ENCODE measurements at regions of chr20 and their contacts with region 1.

Region 1: DNA sequence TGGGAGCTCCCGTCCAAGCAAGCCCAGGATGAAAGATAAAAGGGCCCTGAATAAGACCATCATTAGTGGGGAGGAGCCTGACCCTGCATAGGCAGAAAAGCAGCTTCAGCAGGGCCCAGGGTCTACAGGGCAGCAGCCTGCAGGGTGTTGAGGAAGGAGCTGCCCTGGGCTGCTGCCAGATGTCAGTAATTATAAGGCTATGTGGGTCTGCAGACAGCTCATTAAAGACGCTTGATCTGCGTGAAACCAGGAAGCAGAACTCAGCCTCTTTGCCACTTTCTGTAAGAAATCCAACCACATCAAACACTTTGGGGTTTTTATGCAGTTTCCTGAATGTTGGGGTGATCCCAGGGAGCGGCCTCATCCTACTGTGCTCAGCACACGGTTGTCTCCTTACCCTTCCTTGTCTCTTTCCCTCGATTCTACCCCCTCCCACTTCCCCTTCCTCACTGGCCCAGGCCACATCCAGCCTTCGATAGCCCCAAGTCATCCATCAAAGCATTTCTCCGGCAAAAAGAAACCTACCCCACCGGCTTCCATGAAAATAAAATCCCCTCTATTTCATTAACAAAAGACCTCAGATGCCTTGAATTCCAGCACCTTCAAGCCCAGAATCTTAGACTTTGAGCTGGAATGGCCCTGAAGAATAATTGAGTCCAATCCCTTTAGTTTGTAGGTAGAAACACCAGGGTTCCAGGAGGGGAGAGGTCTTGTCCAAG is 1.0 kb upstream of the TGM6 start:
- DNase-seq: no peak
- ATAC-seq: no peak
- H3K4me3 ChIP-seq: no peak overlapping the region
- H3K27ac ChIP-seq: no peak overlapping the region
- H3K4me1 ChIP-seq: no peaks in the 10 kb centered on the region
- H3K27me3 ChIP-seq: peaks cover 0 to 8% (median 0%) of the 10 kb centered on the region in 7 donors
- CTCF ChIP-seq: no peak

Region 2: GRCh38 chr20:2314759-2315439 is 64.8 kb before region 1 on chr20:
- intact Hi-C with region 1: loop called in 1 of 10 experiments (anchors 10 kb)
- DNase-seq: peak; percentile 24 to 42
- ATAC-seq: peak; percentile 65 to 94 (median 86)
- H3K4me3 ChIP-seq: no peak overlapping the region
- H3K27ac ChIP-seq: peak overlapping the region in 2 of 10 donors; percentile 39 to 83
- H3K4me1 ChIP-seq: peaks cover 0 to 26% (median 0%) of the 10 kb centered on the region in 9 donors
- H3K27me3 ChIP-seq: peaks cover 0 to 11% (median 0%) of the 10 kb centered on the region in 7 donors
- CTCF ChIP-seq: no peak

Region 3: DNA sequence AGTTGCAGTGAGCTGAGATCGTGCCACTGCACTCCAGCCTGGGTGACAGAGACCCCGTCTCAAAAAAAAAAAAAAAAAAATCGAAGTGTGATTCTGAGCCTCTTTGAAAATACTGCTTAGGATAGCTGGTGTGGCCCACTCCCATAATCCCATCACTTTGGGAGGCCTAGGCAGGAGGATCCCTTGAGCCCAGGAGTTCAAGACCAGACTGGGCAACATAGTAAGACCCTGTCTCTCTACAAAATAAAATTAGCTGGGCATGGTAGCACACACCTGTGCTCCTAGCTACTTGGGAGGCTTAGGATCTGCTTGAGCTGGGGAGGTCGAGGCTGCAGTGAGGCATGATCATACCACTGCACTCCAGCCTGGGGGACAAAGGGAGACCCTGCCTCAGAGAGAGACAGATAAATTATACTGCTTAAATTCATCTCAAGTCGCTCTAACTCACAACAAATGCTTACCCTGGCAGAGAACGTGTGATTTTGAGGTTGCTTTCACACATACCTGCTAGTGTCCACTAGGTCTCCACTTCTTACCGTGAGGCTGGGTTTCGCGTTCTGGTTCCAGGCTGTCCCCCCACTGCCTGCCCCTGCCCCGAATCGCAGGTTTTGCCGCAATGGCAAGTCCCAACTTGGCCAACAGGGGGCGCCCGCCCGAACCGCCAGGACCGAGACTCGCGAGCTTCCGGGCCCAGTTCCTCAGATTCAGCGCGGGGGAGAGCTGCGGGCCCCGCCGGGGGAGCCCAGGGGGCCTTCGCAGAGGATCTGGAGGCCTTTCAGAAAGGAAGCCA is 144.4 kb after region 1 on chr20:
- intact Hi-C with region 1: no loop called
- DNase-seq: peak; percentile 88 to 90
- ATAC-seq: peak; percentile 78 to 87 (median 84)
- H3K4me3 ChIP-seq: peak overlapping the region; percentile 58 to 95 (median 72)
- H3K27ac ChIP-seq: peak overlapping the region; percentile 55 to 96 (median 92)
- H3K4me1 ChIP-seq: peaks cover 0 to 35% (median 6%) of the 10 kb centered on the region in 9 donors
- H3K27me3 ChIP-seq: peaks cover 0 to 5% (median 0%) of the 10 kb centered on the region in 7 donors
- CTCF ChIP-seq: peak; percentile 88 to 99 (median 96)

Measured in heart right ventricle (tissue), 16 donors.